Posterior vena cava (tissue), 2 donors: ENCODE measurements at regions of chr2 and their contacts with region 1.

Region 1: GRCh38 chr2:99569386-99569785 is 79.6 kb upstream of the REV1 start:
- DNase-seq: no peak

Region 2: DNA sequence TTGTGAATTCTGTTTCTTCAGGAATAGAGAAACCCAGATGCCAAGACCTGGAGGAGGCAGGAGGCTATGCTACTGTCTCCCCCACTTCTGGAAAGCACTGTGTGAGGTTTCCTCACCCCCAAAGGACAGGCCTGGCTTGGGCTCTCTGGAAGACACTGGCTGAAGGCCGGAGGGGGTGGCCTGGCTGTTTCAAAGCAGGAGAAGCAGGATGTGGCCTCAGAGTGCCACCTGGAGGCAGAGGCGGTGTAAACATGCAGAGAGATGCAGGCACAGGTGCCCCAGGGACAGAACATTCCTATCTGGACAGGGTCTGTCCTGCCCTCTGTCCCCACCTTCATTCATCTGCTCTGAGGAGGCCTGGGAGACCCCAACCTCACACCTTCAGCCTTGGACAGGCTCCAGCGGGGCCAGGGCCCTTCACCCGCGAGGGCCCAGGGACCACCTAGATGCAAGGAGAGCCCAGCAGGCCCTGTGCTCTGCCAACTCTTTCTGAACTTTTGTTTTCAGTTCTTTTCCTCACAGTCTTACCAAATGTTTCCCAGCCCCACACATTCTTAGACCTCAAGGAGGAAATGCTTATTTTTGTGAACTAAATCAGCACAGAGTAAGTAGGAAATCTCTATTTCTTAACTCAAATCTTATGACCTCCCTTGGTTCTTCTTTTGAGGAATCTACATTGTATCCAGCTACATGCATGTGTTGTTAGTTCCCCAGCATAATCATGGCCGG is 673.7 kb after region 1 on chr2:
- intact Hi-C with region 1: loop called in 1 of 2 experiments (anchors 10 kb)
- DNase-seq: peak; percentile 87